ENCODE measurements at regions of chr6 and their contacts with region 1.

Region 1: GRCh38 chr6:75412969-75413662 is 80.5 kb downstream of the FILIP1 start:
- DNase-seq: no peak
- ATAC-seq: no peak
- H3K4me3 ChIP-seq: no peak overlapping the region
- H3K27ac ChIP-seq: no peak overlapping the region
- H3K4me1 ChIP-seq: no peaks in the 10 kb centered on the region
- H3K27me3 ChIP-seq: no peaks in the 10 kb centered on the region
- CTCF ChIP-seq: no peak
- EP300 ChIP-seq: no peak
- POLR2A ChIP-seq: no peak
- RAD21 ChIP-seq: no peak

Region 2: DNA sequence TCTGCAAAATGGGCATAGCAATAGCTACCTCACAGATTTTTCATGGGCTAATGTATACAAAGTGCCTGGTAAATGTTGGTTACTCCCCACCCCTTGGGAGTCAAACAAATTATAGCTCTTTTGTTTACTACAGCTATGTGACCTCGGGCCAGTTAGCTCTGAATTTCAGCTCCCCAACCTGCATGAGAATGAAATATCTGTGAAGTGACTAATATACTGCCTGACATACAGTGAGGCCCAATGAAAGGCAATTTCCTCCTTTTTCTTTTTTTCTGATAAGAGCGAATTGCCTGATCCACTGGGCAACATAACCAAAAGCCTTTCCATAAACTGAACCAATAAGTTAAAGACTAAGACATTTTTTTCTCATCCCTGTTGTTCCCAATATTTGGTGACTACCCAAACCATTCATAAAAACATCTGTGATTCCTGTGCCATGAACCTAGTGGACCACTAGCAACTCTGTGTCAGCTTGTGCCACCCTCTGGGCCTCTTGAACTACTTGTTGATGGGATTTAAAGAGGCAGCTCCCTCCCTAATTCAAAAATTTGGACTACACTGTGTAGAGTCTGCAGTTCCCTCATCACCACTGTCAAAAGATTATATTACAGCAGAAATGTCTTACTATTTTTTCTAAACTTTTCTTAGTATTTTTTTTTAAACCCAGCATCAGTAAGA is 36.6 kb before region 1 on chr6:
- CTCF ChIA-PET with region 1: no interaction called
- POLR2A ChIA-PET with region 1: interaction called, 5 read pairs
- RAD21 ChIA-PET with region 1: interaction called, 4 read pairs
- SMC1A ChIA-PET with region 1: interaction called, 5 read pairs
- in situ Hi-C with region 1: no loop called
- intact Hi-C with region 1: loop called (anchors 5 kb)
- DNase-seq: no peak
- ATAC-seq: peak; percentile 52
- H3K4me3 ChIP-seq: no peak overlapping the region
- H3K27ac ChIP-seq: no peak overlapping the region
- H3K4me1 ChIP-seq: no peaks in the 10 kb centered on the region
- H3K27me3 ChIP-seq: no peaks in the 10 kb centered on the region
- CTCF ChIP-seq: no peak
- EP300 ChIP-seq: no peak
- POLR2A ChIP-seq: no peak
- RAD21 ChIP-seq: no peak

Region 3: DNA sequence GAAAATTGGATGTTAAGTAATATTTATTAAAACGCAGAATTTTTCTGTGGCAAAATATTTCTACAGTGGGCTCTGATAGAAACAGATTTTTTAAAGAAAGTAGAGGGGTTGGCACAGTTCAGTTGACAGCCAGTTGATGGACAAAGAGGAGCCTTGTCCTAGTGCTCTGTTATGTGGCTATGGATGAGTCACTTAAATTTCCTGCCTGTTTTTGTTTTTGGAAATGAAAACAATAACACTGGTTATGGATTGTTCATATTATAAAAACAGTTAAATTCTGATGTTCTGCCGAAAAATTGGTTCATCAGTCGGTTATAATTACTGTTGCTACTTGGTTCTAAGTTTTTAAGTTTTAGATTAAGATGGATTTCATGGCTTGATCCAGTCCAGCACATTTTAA is 378.8 kb after region 1 on chr6:
- CTCF ChIA-PET with region 1: no interaction called
- POLR2A ChIA-PET with region 1: no interaction called
- RAD21 ChIA-PET with region 1: no interaction called
- SMC1A ChIA-PET with region 1: no interaction called
- in situ Hi-C with region 1: no loop called
- intact Hi-C with region 1: no loop called
- DNase-seq: no peak
- ATAC-seq: no peak
- H3K4me3 ChIP-seq: no peak overlapping the region
- H3K27ac ChIP-seq: no peak overlapping the region
- H3K4me1 ChIP-seq: no peaks in the 10 kb centered on the region
- H3K27me3 ChIP-seq: no peaks in the 10 kb centered on the region
- CTCF ChIP-seq: no peak
- EP300 ChIP-seq: no peak
- POLR2A ChIP-seq: no peak
- RAD21 ChIP-seq: no peak